A673 (cell line): ENCODE measurements at regions of chr1 and their contacts with region 1.

Region 1: DNA sequence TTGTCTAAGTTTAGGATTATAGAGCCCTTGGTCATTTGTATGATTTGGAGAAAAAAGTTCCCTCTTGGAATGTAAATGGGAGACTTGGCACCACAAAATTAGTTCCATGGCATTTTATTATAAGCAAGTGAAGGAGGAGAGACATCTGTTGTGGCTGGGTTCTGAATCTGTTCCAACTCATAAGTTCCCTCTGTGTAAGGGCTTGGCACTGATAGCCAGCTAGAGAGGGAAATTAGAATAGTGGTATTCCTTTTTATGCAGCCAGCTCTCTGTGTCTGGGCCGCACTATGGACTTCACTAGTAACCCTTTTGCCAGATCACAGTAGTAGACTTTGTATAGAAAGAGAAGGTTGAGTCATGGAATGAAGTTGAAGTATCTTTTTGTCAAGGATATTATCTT is 31.1 kb downstream of the GNAI3 start:
- DNase-seq: no peak
- H3K4me3 ChIP-seq: no peak overlapping the region
- H3K27ac ChIP-seq: peak overlapping the region; percentile 3
- H3K4me1 ChIP-seq: no peaks in the 10 kb centered on the region
- H3K27me3 ChIP-seq: no peaks in the 10 kb centered on the region
- CTCF ChIP-seq: no peak

Region 2: DNA sequence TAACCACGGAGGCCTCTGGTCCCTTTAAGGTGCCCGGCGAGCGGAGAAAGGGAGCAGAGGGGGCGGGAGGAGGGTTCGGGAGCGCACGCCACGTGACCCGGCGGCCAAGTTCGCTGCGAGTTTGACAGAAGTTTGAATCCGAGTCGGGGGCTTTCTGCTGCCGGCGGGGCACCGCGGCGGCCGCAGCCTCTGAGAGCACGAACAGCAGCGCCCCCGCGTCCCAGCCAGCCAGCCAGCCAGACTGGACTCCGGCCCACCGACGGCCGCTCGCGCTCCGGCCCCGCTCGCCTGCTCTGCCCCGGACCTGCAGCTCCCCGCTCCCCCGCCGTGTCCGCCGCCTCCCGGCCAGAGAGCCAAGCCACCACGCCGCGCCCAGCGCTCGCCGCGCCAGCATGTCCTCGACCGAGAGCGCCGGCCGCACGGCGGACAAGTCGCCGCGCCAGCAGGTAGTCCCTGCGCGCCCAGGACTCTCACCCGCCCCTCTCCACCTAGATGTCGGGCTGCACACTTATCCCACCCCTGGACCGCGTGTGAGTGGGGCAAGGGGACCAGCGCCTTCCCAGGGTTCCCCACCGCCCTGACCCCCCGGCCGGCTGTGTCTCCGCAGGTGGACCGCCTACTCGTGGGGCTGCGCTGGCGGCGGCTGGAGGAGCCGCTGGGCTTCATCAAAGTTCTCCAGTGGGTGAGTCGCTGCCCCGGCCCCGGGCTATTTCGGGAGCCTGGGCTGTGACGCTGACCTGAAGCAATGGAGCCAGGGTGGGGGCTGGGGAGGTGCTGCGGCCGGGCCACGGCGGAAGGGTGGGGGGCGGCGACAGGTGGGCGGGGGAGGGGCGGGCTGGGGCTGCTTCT is 112.8 kb before region 1 on chr1 and contains the start of gene SYPL2:
- CTCF ChIA-PET with region 1: no interaction called
- POLR2A ChIA-PET with region 1: no interaction called
- intact Hi-C with region 1: no loop called
- DNase-seq: peak; percentile 51
- H3K4me3 ChIP-seq: peak within 1 kb of the TSS; percentile 49
- H3K27ac ChIP-seq: no peak within 1 kb of the TSS
- H3K4me1 ChIP-seq: peaks cover 18% of the 10 kb centered on the region
- H3K27me3 ChIP-seq: peaks cover 99% of the 10 kb centered on the region
- CTCF ChIP-seq: no peak
- total RNA-seq, gene SYPL2: 0.09 and 0.13 TPM in 2 replicates

Region 3: DNA sequence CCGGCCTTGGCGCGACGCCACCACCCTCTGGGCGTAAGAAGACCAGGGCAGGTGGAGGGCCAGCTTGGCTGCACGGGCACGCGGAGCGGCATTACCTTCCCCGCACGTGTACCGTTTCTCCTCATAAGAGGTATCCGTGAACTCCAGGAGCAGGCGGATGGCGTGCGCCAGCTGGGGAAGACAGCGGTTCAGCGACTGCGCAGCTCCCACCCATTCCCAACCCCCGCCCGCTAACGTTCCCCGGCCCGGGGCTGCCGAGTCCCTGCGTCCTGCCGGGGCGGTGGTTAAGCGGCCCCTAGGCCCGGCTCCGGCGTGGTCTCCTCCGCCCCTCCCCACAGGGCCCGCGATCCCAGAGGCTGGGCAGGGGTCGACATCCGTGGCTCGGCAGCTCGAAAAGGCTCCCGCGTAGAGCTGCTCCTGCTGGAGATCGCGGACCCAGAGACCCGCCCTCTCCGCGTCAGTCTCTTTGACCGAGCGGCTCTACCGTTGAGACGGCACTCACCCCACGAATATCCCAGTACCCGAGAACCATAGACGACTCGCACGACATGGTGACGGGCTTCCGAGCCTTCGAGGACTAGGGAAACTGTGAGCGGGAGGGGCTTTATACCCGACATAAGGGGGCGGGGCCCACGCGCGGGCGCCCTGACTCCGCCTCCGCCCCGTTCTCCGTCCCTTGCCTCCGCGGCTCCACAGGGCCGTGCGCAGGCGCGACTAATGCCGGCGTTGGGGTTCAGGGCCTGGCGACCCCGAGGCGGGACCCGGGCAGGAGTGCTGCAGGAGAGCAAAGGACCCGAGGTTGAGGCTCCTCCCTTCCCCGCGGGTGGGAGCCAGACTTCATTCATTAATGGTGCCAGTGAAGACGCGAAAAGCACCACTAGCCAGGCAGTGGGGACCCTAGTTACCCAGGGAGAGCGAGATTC is 160.5 kb after region 1 on chr1:
- CTCF ChIA-PET with region 1: no interaction called
- POLR2A ChIA-PET with region 1: interaction called, 13 read pairs
- intact Hi-C with region 1: no loop called
- DNase-seq: peak; percentile 86
- H3K4me3 ChIP-seq: peak overlapping the region; percentile 74
- H3K27ac ChIP-seq: peak overlapping the region; percentile 77
- H3K4me1 ChIP-seq: no peaks in the 10 kb centered on the region
- H3K27me3 ChIP-seq: no peaks in the 10 kb centered on the region
- CTCF ChIP-seq: no peak